ENCODE measurements at regions of chr20 and their contacts with region 1.

Region 1: DNA sequence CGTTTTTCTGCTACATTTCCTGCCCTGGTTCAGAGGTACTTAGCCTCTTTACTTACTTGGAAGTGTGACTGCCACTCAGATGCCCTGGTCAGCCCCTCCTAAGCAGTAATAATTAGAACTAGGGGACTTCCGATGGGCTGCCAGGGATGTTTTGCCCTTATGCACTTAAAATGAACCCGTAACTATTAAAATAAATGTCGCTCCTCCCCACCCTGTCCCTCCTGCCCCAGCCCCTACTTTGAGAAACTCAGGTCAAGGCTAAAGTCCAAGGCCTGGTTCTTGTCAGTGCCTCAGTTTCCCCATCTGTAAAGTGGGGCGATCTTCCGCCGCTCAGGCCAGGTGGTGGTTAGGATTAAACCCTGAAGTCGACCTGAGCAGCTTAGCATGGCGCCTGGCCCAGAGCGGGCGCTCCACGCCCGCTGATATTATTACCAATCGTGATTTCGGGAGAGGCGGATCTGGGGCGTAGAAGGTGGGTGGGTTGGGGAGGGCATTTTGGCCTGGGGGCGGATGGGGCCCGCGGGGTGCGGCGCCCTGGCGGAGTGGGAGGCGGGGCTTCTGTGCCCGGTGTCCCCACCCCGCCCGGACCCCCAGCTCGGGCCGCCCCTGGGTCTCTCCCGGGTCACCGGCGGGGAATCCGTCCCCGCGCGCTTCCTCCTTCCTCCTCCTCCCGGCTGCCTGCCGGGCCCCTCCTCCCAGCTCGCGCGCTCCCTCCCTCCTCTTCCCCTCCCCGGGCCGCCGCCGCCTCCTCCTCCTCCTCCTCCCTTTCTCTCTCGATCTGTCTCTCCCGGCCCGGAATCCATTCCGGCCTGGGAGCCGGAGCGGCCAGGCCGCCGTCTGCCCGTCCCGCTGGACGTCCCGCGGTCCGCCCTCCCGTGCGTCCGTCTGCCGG is at the start of gene SRC:
- DNase-seq: peak; percentile 77
- H3K4me3 ChIP-seq: peak within 1 kb of the TSS; percentile 47 to 61 (median 52)
- H3K27ac ChIP-seq: no peak within 1 kb of the TSS
- H3K4me1 ChIP-seq: peaks cover 42% of the 10 kb centered on the region
- H3K27me3 ChIP-seq: no peaks in the 10 kb centered on the region
- CTCF ChIP-seq: peak in 1 of 2 donors; percentile 2
- total RNA-seq, gene SRC: 52.7 to 60.2 TPM

Region 2: GRCh38 chr20:37282556-37282955 is 63.0 kb before region 1 on chr20:
- CTCF ChIA-PET with region 1: no interaction called
- dilution Hi-C with region 1: no loop called
- in situ Hi-C with region 1: loop called in 1 of 2 experiments (anchors 10 kb)
- intact Hi-C with region 1: loop called (anchors 2 kb)
- DNase-seq: peak; percentile 55
- H3K4me3 ChIP-seq: no peak overlapping the region
- H3K27ac ChIP-seq: no peak overlapping the region
- H3K4me1 ChIP-seq: peaks cover 7% of the 10 kb centered on the region
- H3K27me3 ChIP-seq: no peaks in the 10 kb centered on the region
- CTCF ChIP-seq: peak; percentile 62 to 80

Region 3: DNA sequence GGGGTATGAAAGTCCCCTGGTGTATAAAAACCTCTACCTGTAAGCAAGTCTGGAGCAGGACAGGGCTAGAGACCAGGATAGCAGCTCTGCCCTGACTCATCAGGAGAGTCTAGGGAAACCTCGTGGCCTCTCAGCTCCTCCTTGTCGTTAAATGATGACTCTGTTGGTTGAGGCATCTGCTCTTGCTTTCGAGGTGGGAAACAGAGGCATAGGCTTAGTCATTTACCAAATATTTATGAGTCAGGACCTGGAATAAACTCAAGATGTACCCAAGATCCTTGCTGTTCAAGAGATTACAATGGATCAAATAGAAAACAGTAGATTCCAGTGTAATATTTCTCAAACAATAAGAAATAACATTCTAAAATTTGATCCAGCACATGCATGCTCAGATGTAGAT is 50.6 kb before region 1 on chr20:
- CTCF ChIA-PET with region 1: no interaction called
- dilution Hi-C with region 1: loop called (anchors 10 kb)
- in situ Hi-C with region 1: no loop called
- intact Hi-C with region 1: loop called (anchors 2 kb)
- DNase-seq: peak; percentile 99
- H3K4me3 ChIP-seq: peak overlapping the region in 1 of 3 experiments; percentile 18
- H3K27ac ChIP-seq: peak overlapping the region; percentile 90
- H3K4me1 ChIP-seq: peaks cover 61% of the 10 kb centered on the region
- H3K27me3 ChIP-seq: no peaks in the 10 kb centered on the region
- CTCF ChIP-seq: no peak

Region 4: DNA sequence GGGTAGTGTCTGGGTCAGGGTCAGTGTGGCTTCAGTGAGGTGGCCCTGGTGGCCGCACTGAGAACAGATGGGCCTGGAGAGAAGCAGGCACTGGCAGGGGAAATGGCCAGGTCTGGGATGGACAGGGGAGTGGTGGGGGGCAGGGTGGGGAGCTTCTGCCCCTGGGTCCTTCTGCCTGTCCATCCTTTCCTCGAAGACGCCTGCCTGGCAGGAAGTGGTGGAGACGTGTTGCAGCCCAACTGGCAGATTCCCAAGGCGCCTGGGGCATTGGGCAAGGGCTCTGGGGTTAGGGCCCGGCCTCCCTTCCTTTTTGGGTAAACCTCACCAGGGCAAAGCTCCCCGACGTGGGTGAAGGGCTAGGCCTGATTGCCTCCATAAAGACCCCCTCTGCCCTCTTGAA is 10.8 kb after region 1 on chr20:
- CTCF ChIA-PET with region 1: interaction called, 3 read pairs
- dilution Hi-C with region 1: no loop called
- in situ Hi-C with region 1: no loop called
- intact Hi-C with region 1: loop called (anchors 1 kb)
- DNase-seq: peak; percentile 59
- H3K4me3 ChIP-seq: no peak overlapping the region
- H3K27ac ChIP-seq: no peak overlapping the region
- H3K4me1 ChIP-seq: peaks cover 48% of the 10 kb centered on the region
- H3K27me3 ChIP-seq: no peaks in the 10 kb centered on the region
- CTCF ChIP-seq: peak in 1 of 2 donors; percentile 4

Region 5: GRCh38 chr20:37384683-37385174 is 39.1 kb after region 1 on chr20:
- CTCF ChIA-PET with region 1: no interaction called
- dilution Hi-C with region 1: no loop called
- in situ Hi-C with region 1: no loop called
- intact Hi-C with region 1: loop called (anchors 5 kb)
- DNase-seq: peak; percentile 30
- H3K4me3 ChIP-seq: no peak overlapping the region
- H3K27ac ChIP-seq: no peak overlapping the region
- H3K4me1 ChIP-seq: peaks cover 8% of the 10 kb centered on the region
- H3K27me3 ChIP-seq: no peaks in the 10 kb centered on the region
- CTCF ChIP-seq: peak; percentile 56 to 92

Region 6: GRCh38 chr20:37439223-37439933 is 93.8 kb after region 1 on chr20:
- CTCF ChIA-PET with region 1: no interaction called
- dilution Hi-C with region 1: loop called (anchors 5 kb)
- in situ Hi-C with region 1: no loop called
- intact Hi-C with region 1: no loop called
- DNase-seq: no peak
- H3K4me3 ChIP-seq: no peak overlapping the region
- H3K27ac ChIP-seq: no peak overlapping the region
- H3K4me1 ChIP-seq: no peaks in the 10 kb centered on the region
- H3K27me3 ChIP-seq: no peaks in the 10 kb centered on the region
- CTCF ChIP-seq: no peak